ENCODE measurements at regions of chr6 and their contacts with region 1.

Region 1: GRCh38 chr6:16183187-16183664 is 54.3 kb downstream of the MYLIP start:
- DNase-seq: no peak
- ATAC-seq: peak; percentile 60
- H3K4me3 Mint-ChIP-seq: no peak overlapping the region
- H3K27ac Mint-ChIP-seq: no peak overlapping the region
- H3K4me1 Mint-ChIP-seq: peaks cover 24% of the 10 kb centered on the region
- H3K27me3 Mint-ChIP-seq: no peaks in the 10 kb centered on the region
- CTCF ChIP-seq: peak; percentile 74

Region 2: GRCh38 chr6:15389765-15390723 is 793.2 kb before region 1 on chr6:
- CTCF ChIA-PET with region 1: no interaction called
- POLR2A ChIA-PET with region 1: no interaction called
- intact Hi-C with region 1: no loop called
- DNase-seq: peak; percentile 44
- ATAC-seq: peak; percentile 27
- H3K4me3 Mint-ChIP-seq: peak overlapping the region; percentile 22
- H3K27ac Mint-ChIP-seq: peak overlapping the region; percentile 65
- H3K4me1 Mint-ChIP-seq: peaks cover 74% of the 10 kb centered on the region
- H3K27me3 Mint-ChIP-seq: no peaks in the 10 kb centered on the region
- CTCF ChIP-seq: peak; percentile 54

Region 3: DNA sequence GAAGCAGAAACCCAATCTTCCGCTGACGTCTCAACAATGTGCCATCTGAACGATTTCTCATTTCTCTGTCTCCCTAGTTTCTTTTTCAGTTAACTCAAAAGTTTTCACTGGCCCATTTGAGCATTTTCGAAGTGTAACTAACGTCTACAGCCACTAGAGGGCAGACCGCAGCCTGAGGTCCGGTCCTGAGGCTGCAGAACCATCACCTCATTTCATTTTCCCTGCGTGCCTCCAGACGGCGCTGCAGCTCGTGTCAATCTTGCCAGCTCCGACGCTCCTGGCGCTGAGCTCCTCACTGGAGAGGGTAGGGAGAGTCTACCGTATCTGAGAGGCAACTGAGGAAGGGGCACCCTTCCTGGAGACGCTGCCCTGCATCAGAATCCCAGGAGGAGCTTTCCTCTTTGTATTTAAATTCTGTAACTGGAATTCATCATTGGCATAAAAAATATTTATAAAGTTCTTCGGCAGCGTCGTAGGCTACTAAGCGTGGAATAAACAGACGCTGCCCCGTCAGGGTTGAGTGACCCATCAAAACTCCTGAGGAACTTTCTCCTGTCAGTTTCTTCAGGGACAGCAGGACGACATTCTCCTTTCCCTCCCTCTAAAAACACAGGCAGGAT is 491.9 kb before region 1 on chr6:
- CTCF ChIA-PET with region 1: interaction called, 39 read pairs
- POLR2A ChIA-PET with region 1: no interaction called
- intact Hi-C with region 1: loop called (anchors 2 kb)
- DNase-seq: peak; percentile 86
- ATAC-seq: peak; percentile 99
- H3K4me3 Mint-ChIP-seq: peak overlapping the region; percentile 11
- H3K27ac Mint-ChIP-seq: peak overlapping the region; percentile 42
- H3K4me1 Mint-ChIP-seq: peaks cover 14% of the 10 kb centered on the region
- H3K27me3 Mint-ChIP-seq: peaks cover 6% of the 10 kb centered on the region
- CTCF ChIP-seq: peak; percentile 99

Region 4: DNA sequence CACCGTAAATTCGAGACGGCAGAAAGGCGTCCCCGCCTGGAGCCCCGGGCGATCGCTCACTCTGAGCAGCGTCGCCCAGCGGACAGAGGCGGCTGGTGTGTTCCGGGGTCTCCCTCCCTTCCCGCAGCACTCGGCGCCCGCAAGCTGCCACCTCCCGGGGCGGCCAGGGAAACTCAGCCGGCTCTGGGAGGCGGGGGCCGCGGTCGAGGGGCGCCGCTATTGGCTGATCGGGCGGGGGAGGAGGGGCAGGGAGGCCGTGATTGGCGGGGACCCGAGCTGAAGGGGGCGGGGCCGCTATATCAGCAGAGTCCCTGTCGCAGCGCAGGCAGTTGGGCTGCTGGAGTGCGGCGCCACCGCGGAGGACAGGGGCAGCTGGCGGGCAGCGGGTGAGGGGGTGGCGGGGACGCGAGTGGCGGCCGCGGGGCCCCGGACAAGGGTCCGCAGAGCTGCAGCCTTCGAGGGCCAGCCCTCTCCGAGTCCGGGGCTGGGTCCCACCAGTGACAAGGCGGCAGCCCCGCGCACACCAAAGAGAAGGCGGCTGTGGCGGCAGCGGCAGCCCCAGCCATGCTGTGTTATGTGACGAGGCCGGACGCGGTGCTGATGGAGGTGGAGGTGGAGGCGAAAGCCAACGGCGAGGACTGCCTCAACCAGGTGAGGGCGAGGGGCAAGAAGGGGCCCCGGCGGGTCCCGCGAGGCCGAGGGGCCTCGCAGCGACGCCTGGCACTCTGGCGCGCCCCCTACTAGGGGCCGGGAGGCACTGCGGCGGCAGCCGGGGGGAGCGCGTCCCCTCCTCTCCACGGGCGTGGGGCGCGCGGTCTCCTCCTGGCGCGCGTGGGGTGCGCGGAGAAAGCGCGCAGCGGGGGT is 54.2 kb before region 1 on chr6 and contains the start of gene MYLIP:
- CTCF ChIA-PET with region 1: interaction called, 28 read pairs
- POLR2A ChIA-PET with region 1: interaction called, 9 read pairs
- intact Hi-C with region 1: loop called (anchors 5 kb)
- DNase-seq: peak; percentile 97
- ATAC-seq: peak; percentile 83
- H3K4me3 Mint-ChIP-seq: peak within 1 kb of the TSS; percentile 88
- H3K27ac Mint-ChIP-seq: peak within 1 kb of the TSS; percentile 91
- H3K4me1 Mint-ChIP-seq: peaks cover 22% of the 10 kb centered on the region
- H3K27me3 Mint-ChIP-seq: peaks cover 3% of the 10 kb centered on the region
- CTCF ChIP-seq: peak; percentile 60
- total RNA-seq, gene MYLIP: 7.7 to 8.1 TPM

Region 5: GRCh38 chr6:16168858-16169257 is 14.4 kb before region 1 on chr6:
- CTCF ChIA-PET with region 1: interaction called, 10 read pairs
- POLR2A ChIA-PET with region 1: no interaction called
- intact Hi-C with region 1: no loop called
- DNase-seq: peak; percentile 17
- ATAC-seq: peak; percentile 78
- H3K4me3 Mint-ChIP-seq: no peak overlapping the region
- H3K27ac Mint-ChIP-seq: peak overlapping the region; percentile 6
- H3K4me1 Mint-ChIP-seq: peaks cover 29% of the 10 kb centered on the region
- H3K27me3 Mint-ChIP-seq: peaks cover 8% of the 10 kb centered on the region
- CTCF ChIP-seq: peak; percentile 60

Region 6: DNA sequence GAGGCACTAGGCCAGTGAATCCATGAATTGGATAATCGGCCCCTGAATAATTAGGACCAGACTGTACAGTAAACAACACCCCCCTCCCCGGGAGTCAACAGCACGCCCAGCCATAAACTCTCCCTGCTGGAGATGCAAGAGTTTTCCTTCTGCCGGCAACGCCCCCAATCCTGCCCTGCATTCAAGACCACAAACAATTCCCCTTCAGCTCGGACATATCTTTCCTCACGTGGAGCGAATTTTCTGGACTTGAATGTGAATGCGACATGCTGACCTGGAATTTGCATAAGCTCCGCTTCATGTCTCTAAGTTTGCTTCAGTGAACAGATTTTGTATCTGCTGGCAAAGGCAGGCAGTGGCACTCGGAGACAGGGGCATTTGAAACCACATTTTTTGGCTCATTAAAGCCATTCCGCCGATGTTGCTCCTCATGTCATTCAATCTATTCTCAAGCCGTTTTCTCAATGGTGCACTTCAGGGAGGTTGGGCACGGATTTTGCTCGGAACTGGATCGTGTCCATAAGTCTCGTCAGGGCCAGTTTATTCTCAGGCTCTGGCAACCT is 17.2 kb after region 1 on chr6:
- CTCF ChIA-PET with region 1: interaction called, 29 read pairs
- POLR2A ChIA-PET with region 1: no interaction called
- intact Hi-C with region 1: no loop called
- DNase-seq: no peak
- ATAC-seq: no peak
- H3K4me3 Mint-ChIP-seq: no peak overlapping the region
- H3K27ac Mint-ChIP-seq: no peak overlapping the region
- H3K4me1 Mint-ChIP-seq: no peaks in the 10 kb centered on the region
- H3K27me3 Mint-ChIP-seq: no peaks in the 10 kb centered on the region
- CTCF ChIP-seq: no peak

Region 7: DNA sequence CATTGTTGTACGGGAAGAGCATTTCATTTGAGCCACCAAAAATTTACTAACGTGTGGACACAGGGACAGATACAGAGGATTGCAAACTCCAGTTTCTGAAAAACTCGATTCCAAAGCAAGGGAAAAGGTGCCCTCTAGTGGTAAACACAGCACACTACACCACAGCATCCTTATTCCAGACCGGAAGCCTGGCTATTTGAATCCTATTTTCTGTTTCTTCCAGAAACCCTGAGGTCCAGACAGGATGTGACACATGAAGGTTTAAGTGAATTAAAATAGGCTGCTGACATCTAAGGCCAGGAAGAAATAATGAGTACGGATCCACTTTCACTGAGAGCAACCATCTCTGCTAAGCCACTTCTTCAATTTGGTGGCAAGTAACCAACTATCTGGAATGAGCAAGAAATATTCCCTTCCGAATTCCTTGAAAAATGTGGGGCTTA is 23.4 kb after region 1 on chr6:
- CTCF ChIA-PET with region 1: interaction called, 29 read pairs
- POLR2A ChIA-PET with region 1: no interaction called
- intact Hi-C with region 1: no loop called
- DNase-seq: peak; percentile 56
- ATAC-seq: peak; percentile 79
- H3K4me3 Mint-ChIP-seq: no peak overlapping the region
- H3K27ac Mint-ChIP-seq: no peak overlapping the region
- H3K4me1 Mint-ChIP-seq: no peaks in the 10 kb centered on the region
- H3K27me3 Mint-ChIP-seq: peaks cover 5% of the 10 kb centered on the region
- CTCF ChIP-seq: peak; percentile 98

Measured in activated CD8-positive, alpha-beta T cell treated with anti-CD3 and anti-CD28 coated beads for 36 hours (primary cell).